ENCODE measurements at regions of chr1 and their contacts with region 1.

Region 1: DNA sequence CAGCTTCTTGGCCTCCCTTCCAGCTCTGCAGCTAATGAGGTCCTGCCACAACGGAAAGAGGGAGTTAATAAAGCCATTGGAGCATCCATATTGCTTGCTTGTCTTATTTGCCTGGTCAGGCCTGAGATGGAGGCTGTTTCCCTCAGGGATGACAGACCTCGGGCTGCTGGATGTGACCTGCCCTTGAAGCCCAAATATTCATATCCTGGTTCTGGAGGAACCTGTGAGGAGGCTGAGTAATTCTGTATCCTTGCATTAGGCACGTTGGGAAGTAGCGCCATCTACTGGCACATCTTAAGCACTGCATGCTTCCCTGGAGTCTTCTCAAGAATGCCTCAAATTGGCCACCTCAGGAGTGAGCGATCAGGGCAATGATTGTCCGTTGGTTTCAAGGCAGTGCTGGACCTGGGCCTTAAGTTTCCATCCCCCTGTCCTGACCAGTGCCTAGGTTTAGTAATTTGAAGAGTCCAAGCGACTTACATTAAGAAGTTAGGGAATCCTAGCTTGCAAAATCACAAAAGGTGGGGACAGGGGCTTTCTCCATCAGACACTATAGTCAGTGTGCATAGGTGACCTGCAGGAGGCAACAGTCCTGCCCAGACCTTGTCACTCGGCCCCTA is 13.8 kb upstream of the NASP start:
- H3K4me3 ChIP-seq: no peak overlapping the region
- H3K27ac ChIP-seq: no peak overlapping the region
- H3K4me1 ChIP-seq: no peaks in the 10 kb centered on the region
- CTCF ChIP-seq: peak; percentile 87

Region 2: DNA sequence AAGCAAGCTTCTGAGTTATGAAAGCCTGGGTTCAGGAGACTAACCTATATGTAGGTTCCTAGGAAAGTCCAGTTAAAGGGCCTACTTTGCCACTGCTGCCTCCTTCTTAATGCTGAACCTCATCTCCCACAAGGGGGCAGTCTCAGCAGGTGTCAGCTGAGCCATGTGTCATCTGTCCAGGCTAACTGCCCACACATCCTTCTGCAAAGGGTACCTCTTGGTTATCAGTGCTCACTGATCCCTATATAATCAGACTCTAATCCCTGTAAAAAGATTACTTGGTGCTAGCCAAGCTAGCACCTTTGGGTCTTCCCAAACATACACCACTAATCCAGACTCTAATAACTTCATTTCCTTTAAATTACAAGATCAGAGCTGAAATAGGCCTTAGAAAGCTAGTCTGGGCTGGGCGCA is 57.4 kb before region 1 on chr1:
- CTCF ChIA-PET with region 1: interaction called, 90 read pairs
- POLR2A ChIA-PET with region 1: interaction called, 15 read pairs
- H3K4me3 ChIP-seq: no peak overlapping the region
- H3K27ac ChIP-seq: no peak overlapping the region
- H3K4me1 ChIP-seq: no peaks in the 10 kb centered on the region
- CTCF ChIP-seq: no peak

Region 3: DNA sequence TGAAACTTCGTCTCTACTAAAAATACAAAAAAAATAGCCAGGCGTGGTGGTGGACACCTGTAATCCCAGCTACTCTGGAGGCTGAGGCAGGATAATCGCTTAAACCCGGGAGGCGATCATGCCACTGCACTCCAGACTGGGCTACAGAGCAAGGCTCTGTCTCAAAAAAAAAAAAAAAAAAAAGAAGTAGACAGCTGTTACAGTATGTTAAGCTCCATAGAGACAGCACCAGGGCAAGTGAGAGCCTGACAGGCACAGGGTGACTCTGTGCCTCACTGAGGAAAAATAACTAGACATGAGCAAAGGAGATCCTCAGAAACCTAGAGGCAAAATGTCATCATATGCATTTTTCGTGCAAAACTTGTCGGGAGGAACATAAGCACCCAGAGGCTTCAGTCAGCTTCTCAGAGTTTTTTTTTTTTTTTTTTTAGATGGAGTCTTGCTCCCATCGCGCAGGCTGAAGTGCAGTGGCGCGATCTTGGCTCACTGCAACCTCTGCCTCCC is 39.4 kb before region 1 on chr1:
- CTCF ChIA-PET with region 1: interaction called, 17 read pairs
- POLR2A ChIA-PET with region 1: no interaction called
- H3K4me3 ChIP-seq: no peak overlapping the region
- H3K27ac ChIP-seq: no peak overlapping the region
- H3K4me1 ChIP-seq: no peaks in the 10 kb centered on the region
- CTCF ChIP-seq: no peak

Region 4: GRCh38 chr1:45535988-45536766 is 33.9 kb before region 1 on chr1:
- CTCF ChIA-PET with region 1: interaction called, 17 read pairs
- POLR2A ChIA-PET with region 1: no interaction called
- H3K4me3 ChIP-seq: no peak overlapping the region
- H3K27ac ChIP-seq: no peak overlapping the region
- H3K4me1 ChIP-seq: peaks cover 3% of the 10 kb centered on the region; the same call in 1 of the 2 replicates
- CTCF ChIP-seq: no peak

Region 5: GRCh38 chr1:45583264-45583665 is 13.2 kb after region 1 on chr1:
- CTCF ChIA-PET with region 1: interaction called, 71 read pairs
- POLR2A ChIA-PET with region 1: interaction called, 14 read pairs
- H3K4me3 ChIP-seq: peak overlapping the region; percentile 79
- H3K27ac ChIP-seq: peak overlapping the region; percentile 90; the same call in 1 of the 2 replicates
- H3K4me1 ChIP-seq: no peaks in the 10 kb centered on the region
- CTCF ChIP-seq: no peak

Measured in HEK293 (cell line).